WTC11 (cell line): ENCODE measurements at regions of chr19 and their contacts with region 1.

Region 1: GRCh38 chr19:32067685-32068084 is 277.7 kb upstream of the ZNF507 start:
- DNase-seq: peak; percentile 57
- ATAC-seq: peak; percentile 91
- H3K4me3 Mint-ChIP-seq: no peak overlapping the region
- H3K27ac Mint-ChIP-seq: no peak overlapping the region
- H3K4me1 Mint-ChIP-seq: 0 out of 2 replicates have a peak, but pooled peaks cover 2% of the 10 kb centered on the region
- H3K27me3 Mint-ChIP-seq: no peaks in the 10 kb centered on the region
- CTCF ChIP-seq: no peak

Region 2: GRCh38 chr19:32082028-32082427 is 14.3 kb after region 1 on chr19:
- CTCF ChIA-PET with region 1: interaction called, 10 read pairs
- POLR2A ChIA-PET with region 1: no interaction called
- DNase-seq: no peak
- ATAC-seq: no peak
- H3K4me3 Mint-ChIP-seq: no peak overlapping the region
- H3K27ac Mint-ChIP-seq: no peak overlapping the region
- H3K4me1 Mint-ChIP-seq: peaks cover 6% of the 10 kb centered on the region
- H3K27me3 Mint-ChIP-seq: no peaks in the 10 kb centered on the region; the same call in 1 of the 2 replicates
- CTCF ChIP-seq: no peak

Region 3: DNA sequence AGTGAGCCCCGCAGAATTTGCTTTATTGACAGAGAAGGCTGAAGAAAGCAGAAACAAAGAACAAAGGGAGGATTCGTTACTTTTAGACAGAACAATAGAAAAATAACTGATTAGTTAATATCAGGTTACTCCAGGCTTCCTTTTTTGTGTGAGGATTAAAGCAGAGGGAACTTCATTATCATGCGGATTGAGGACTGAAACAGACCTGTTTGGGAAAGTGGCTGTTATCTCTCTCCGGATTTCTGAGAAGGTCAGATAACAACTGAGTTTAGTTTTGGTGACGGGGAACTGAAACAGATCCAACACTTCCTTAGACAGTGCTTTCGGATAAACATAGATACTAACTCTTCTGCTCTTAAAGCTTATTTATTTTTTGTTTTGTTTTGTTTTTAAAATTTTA is 31.3 kb after region 1 on chr19:
- CTCF ChIA-PET with region 1: no interaction called
- POLR2A ChIA-PET with region 1: no interaction called
- DNase-seq: no peak
- ATAC-seq: peak; percentile 60
- H3K4me3 Mint-ChIP-seq: peak overlapping the region; percentile 16; the same call in 1 of the 2 replicates
- H3K27ac Mint-ChIP-seq: peak overlapping the region; percentile 5; the same call in 1 of the 2 replicates
- H3K4me1 Mint-ChIP-seq: peaks cover 23% of the 10 kb centered on the region
- H3K27me3 Mint-ChIP-seq: no peaks in the 10 kb centered on the region; the same call in none of the 2 replicates
- CTCF ChIP-seq: no peak

Region 4: DNA sequence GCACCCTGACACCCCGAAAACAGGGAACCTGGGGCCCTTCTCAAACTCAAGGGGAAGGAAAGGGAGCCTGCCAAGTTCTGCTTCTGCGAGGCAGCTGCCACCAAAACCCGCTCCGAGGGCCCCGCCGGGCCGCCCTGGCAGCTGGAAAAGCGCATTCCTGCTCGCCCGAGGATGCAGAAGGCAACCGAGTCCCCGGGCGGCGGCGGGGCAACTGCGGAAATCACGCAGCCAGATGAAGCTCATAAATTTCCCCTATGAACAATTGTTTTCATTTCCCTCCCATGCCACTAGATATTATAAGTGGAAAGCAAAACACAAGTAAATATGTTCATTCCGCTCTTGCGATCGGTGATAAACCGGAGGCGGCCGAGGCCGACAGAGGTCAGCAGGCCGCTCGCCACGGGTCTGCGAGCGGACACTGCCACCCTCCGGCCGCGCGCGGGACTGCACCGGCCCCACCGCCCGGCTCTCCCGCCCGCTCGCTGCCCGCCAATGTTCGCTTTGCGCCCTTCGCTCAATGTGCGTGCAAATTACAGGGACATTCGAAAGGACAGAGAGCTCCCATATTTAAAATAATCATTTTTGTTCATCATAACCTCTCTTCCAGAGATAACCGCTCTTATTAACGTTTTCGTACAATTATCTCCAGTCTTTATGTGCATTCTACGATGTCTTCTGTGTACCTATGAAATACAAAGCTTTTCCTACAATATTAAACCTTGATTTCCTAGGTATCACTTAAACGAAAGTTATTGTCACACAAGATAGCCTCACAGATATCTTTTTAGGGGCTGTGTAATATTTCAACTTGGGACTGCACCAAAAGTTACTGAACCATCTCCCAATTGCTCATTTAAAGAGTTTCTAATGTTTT is 156.9 kb after region 1 on chr19:
- CTCF ChIA-PET with region 1: interaction called, 17 read pairs
- POLR2A ChIA-PET with region 1: no interaction called
- DNase-seq: peak; percentile 69
- ATAC-seq: peak; percentile 78
- H3K4me3 Mint-ChIP-seq: peak overlapping the region; percentile 74
- H3K27ac Mint-ChIP-seq: no peak overlapping the region
- H3K4me1 Mint-ChIP-seq: peaks cover 5% of the 10 kb centered on the region; the same call in 1 of the 2 replicates
- H3K27me3 Mint-ChIP-seq: peaks cover 33% of the 10 kb centered on the region
- CTCF ChIP-seq: peak; percentile 98